ENCODE measurements at regions of chr16 and their contacts with region 1.

Region 1: DNA sequence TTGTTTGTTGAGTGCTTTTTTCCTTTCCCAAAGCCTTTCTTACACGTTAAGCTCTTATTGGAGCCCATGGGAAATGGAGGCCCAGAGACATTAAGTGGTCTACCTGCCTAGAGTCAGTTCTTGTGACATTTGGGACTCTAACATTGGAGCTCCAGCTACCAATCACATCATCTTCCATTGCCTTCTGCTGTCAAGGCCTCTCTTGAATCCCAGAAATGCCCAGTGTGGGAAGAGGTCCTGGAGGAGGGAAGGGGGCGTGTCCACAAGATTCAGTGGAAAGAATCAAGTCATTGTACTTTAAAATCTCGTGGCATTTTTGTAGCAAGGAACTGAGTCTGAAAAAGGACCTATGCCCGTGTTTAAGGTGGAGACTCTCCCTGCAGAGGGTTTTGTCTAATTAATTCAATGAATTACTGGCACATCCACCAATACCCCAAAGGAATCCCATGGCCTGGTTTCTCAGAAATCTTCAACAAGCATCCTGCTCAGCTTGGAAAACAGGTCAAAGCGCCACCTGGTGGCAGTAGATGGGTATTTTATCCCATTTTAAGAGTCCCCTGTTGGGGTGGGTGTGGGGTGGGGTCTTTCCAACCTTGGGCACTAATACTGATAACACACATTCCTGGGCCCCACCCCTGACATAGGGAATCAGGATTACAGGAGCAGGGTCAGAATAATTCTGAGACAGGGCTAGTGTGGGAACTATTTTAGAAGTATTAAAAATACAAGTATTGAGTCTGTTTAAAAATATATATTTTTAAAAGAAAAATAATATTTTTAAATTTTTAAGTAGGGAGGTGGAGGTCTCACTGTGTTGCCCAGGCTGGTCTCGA is 24.6 kb downstream of the GPT2 start:
- DNase-seq: peak in 1 of 2 donors; percentile 76
- H3K4me3 ChIP-seq: no peak overlapping the region
- H3K27ac ChIP-seq: no peak overlapping the region
- H3K4me1 ChIP-seq: no peaks in the 10 kb centered on the region
- H3K27me3 ChIP-seq: no peaks in the 10 kb centered on the region
- CTCF ChIP-seq: peak; percentile 44 to 94 (median 76)

Region 2: GRCh38 chr16:46853713-46854443 is 54.9 kb before region 1 on chr16:
- intact Hi-C with region 1: loop called (anchors 1 kb)
- DNase-seq: peak in 1 of 2 donors; percentile 73
- H3K4me3 ChIP-seq: no peak overlapping the region
- H3K27ac ChIP-seq: no peak overlapping the region
- H3K4me1 ChIP-seq: peaks cover 0 to 3% of the 10 kb centered on the region in 2 donors
- H3K27me3 ChIP-seq: no peaks in the 10 kb centered on the region
- CTCF ChIP-seq: peak; percentile 55 to 87 (median 80)

Region 3: GRCh38 chr16:47180073-47180472 is 271.3 kb after region 1 on chr16:
- intact Hi-C with region 1: no loop called
- DNase-seq: no peak
- H3K4me3 ChIP-seq: no peak overlapping the region
- H3K27ac ChIP-seq: no peak overlapping the region
- H3K4me1 ChIP-seq: no peaks in the 10 kb centered on the region
- H3K27me3 ChIP-seq: no peaks in the 10 kb centered on the region
- CTCF ChIP-seq: no peak

Measured in ascending aorta (tissue), 2 donors.